MCF 10A (cell line): ENCODE measurements at regions of chr2 and their contacts with region 1.

Region 1: GRCh38 chr2:75608684-75609333 is 37.8 kb upstream of the MRPL19 start:
- DNase-seq: peak; percentile 66
- H3K4me3 Mint-ChIP-seq: no peak overlapping the region
- H3K27ac Mint-ChIP-seq: no peak overlapping the region
- H3K4me1 Mint-ChIP-seq: peaks cover 43% of the 10 kb centered on the region
- H3K27me3 Mint-ChIP-seq: no peaks in the 10 kb centered on the region
- CTCF ChIP-seq: peak; percentile 91

Region 2: GRCh38 chr2:74944987-74945787 is 663.6 kb before region 1 on chr2:
- CTCF ChIA-PET with region 1: no interaction called
- POLR2A ChIA-PET with region 1: no interaction called
- intact Hi-C with region 1: no loop called
- DNase-seq: no peak
- H3K4me3 Mint-ChIP-seq: no peak overlapping the region
- H3K27ac Mint-ChIP-seq: no peak overlapping the region
- H3K4me1 Mint-ChIP-seq: peaks cover 5% of the 10 kb centered on the region
- H3K27me3 Mint-ChIP-seq: no peaks in the 10 kb centered on the region
- CTCF ChIP-seq: no peak

Region 3: GRCh38 chr2:75459565-75460310 is 149.1 kb before region 1 on chr2:
- CTCF ChIA-PET with region 1: interaction called, 369 read pairs
- POLR2A ChIA-PET with region 1: interaction called, 6 read pairs
- intact Hi-C with region 1: loop called (anchors 1 kb)
- DNase-seq: peak; percentile 12
- H3K4me3 Mint-ChIP-seq: no peak overlapping the region
- H3K27ac Mint-ChIP-seq: no peak overlapping the region
- H3K4me1 Mint-ChIP-seq: peaks cover 4% of the 10 kb centered on the region
- H3K27me3 Mint-ChIP-seq: peaks cover 37% of the 10 kb centered on the region
- CTCF ChIP-seq: no peak

Region 4: DNA sequence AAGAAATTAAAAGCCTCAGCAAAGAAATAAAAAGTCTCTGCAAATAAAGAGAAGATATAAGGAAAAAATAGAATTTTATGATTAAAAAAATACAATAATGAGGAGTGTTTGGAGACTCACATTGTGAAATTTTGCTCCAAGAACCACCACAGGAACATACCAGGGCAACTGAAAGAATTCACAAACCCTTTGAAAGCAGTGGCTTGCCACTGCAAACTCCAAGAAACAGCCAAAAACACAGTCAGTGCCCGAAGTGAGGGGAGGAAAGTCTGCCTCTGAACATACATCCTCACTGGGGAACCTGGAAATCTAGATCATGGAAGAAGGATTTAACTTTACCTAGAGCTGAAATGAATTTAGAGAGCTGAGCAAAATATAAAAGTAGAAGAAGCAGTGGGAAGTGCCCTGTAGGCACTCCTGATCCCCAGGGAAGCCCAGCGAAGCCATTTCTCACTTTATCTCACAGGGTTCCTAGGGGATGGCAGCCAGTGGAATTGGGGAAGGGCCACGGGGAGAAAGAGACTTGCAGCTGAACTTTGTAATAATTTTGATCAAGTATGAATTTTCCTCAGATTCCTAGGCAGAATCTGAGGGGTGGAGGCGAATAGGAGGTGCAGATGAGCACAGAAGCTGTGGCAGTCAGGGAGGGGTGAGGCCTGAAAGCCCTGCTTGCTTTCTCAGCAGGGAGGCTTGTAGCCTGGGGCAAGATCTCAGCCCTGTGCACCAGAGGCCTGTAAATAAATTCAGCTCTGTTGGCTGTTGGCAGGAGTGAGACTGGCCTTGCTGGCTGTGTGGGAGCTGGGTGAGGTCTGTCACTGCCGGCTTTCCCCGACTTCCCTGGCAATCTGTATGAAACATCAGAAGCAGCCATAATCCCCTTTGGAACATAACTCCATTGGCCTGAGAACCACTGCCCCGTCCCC is 80.9 kb before region 1 on chr2:
- CTCF ChIA-PET with region 1: interaction called, 16 read pairs
- POLR2A ChIA-PET with region 1: interaction called, 5 read pairs
- intact Hi-C with region 1: no loop called
- DNase-seq: peak; percentile 66
- H3K4me3 Mint-ChIP-seq: no peak overlapping the region
- H3K27ac Mint-ChIP-seq: peak overlapping the region; percentile 76
- H3K4me1 Mint-ChIP-seq: peaks cover 33% of the 10 kb centered on the region
- H3K27me3 Mint-ChIP-seq: no peaks in the 10 kb centered on the region
- CTCF ChIP-seq: no peak

Region 5: GRCh38 chr2:75553935-75554531 is 54.8 kb before region 1 on chr2:
- CTCF ChIA-PET with region 1: interaction called, 60 read pairs
- POLR2A ChIA-PET with region 1: interaction called, 3 read pairs
- intact Hi-C with region 1: no loop called
- DNase-seq: no peak
- H3K4me3 Mint-ChIP-seq: no peak overlapping the region
- H3K27ac Mint-ChIP-seq: no peak overlapping the region
- H3K4me1 Mint-ChIP-seq: peaks cover 1% of the 10 kb centered on the region
- H3K27me3 Mint-ChIP-seq: no peaks in the 10 kb centered on the region
- CTCF ChIP-seq: no peak

Region 6: DNA sequence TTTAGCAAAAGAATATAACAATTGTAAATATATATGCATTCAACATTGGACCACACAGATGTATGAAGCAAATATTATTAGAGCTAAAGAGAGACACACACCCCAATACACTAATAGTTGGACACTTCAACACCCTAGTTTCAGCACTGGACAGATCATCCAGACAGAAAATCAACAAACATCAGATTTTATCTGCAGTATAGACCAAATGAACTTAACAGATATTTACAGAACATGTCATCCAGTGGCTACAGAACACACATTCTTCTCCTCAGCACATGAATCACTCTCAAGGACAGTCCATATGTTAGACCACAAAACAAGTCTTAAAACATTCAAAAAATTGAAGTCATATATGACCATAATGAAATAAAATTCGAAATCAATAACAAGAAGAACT is 26.0 kb before region 1 on chr2:
- CTCF ChIA-PET with region 1: interaction called, 159 read pairs
- POLR2A ChIA-PET with region 1: interaction called, 4 read pairs
- intact Hi-C with region 1: no loop called
- DNase-seq: no peak
- H3K4me3 Mint-ChIP-seq: no peak overlapping the region
- H3K27ac Mint-ChIP-seq: no peak overlapping the region
- H3K4me1 Mint-ChIP-seq: no peaks in the 10 kb centered on the region
- H3K27me3 Mint-ChIP-seq: no peaks in the 10 kb centered on the region
- CTCF ChIP-seq: no peak

Region 7: GRCh38 chr2:75627895-75628504 is 19.2 kb after region 1 on chr2:
- CTCF ChIA-PET with region 1: interaction called, 62 read pairs
- POLR2A ChIA-PET with region 1: interaction called, 4 read pairs
- intact Hi-C with region 1: loop called (anchors 2 kb)
- DNase-seq: peak; percentile 79
- H3K4me3 Mint-ChIP-seq: no peak overlapping the region
- H3K27ac Mint-ChIP-seq: no peak overlapping the region
- H3K4me1 Mint-ChIP-seq: peaks cover 7% of the 10 kb centered on the region
- H3K27me3 Mint-ChIP-seq: no peaks in the 10 kb centered on the region
- CTCF ChIP-seq: peak; percentile 90

Region 8: DNA sequence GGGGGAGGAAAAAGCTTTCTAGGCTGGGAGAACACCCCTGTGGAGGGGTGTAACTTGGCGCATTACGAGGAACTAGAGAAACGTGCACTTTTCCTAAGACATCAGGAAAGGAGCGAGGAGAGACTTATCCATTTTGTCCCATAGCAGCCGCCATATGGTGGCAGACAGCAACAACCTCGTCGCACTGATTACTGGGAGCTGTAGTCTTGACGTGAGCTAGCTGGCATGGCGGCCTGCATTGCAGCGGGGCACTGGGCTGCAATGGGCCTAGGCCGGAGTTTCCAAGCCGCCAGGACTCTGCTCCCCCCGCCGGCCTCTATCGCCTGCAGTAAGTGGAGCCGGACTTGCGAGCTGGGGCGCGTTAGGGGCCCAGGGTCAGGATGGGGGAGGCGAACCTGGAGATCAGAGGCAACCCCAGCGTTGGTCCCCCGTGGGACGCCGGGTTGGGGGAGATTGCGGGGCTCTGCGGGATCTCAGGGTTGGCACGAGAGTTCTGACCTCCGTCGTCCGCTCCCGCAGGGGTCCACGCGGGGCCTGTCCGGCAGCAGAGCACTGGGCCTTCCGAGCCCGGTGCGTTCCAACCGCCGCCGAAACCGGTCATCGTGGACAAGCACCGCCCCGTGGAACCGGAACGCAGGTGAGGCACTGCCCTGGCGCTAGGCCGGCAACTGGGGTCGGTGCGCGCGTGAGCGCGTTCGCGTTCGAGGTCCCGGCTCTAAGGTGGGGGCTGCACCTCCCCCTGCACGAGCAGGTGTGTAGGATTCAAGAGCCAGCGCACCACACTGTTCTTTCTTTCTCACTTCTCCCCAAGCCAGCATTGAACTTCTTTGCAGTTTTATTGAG is 38.0 kb after region 1 on chr2 and contains the start of gene MRPL19:
- CTCF ChIA-PET with region 1: interaction called, 23 read pairs
- POLR2A ChIA-PET with region 1: interaction called, 3 read pairs
- intact Hi-C with region 1: no loop called
- DNase-seq: peak; percentile 93
- H3K4me3 Mint-ChIP-seq: peak within 1 kb of the TSS; percentile 89
- H3K27ac Mint-ChIP-seq: peak within 1 kb of the TSS; percentile 96
- H3K4me1 Mint-ChIP-seq: no peaks in the 10 kb centered on the region
- H3K27me3 Mint-ChIP-seq: no peaks in the 10 kb centered on the region
- CTCF ChIP-seq: no peak
- total RNA-seq, gene MRPL19: 49.1 and 65.4 TPM in 2 replicates